ENCODE measurements at regions of chr5 and their contacts with region 1.

Region 1: DNA sequence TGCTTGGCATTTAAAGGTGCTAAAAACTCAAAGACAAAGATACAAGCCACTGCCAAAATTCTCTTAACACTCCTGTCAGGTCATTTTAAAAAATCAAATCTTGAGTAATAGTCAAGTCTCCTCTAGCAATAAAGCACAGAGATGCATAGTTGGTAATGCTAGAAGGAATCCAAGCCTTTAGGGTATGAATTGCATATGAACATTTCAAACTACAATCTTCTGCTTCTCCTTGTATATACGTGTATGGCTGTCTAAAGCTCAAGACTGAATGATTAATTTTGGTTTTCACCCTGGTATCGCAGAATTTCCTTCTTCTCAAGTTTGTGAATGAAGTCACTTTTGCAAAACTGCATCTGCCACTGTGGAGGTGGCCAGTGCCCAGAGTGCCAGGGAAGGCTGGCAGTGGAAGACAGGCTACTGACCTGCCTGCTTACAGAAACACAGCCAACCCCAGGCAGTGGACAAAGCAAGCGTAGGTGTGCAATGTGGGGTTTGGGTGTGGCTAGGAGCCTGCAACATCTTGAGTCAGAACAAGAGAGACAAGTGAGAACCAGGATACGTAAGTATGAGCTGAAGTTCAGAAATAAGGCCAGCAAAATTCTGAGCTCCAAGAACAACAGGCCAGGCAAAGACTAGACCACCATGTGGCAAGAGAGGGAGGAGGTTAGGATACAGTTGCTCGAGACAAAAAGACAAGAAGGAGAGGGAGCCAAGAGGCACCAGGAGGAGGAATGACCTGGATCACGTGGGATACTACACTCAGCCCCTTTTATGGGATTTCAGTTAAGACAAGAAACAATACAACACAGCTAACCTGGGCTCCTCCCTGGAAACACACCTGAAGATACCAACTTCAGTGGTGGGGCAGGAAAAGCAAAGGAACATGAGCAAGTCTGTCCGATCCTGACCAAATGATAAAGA is 22.6 kb downstream of the MYO10 start:
- DNase-seq: no peak
- H3K4me3 ChIP-seq: no peak overlapping the region
- H3K4me3 Mint-ChIP-seq: no peak overlapping the region
- H3K27ac Mint-ChIP-seq: no peak overlapping the region
- H3K4me1 ChIP-seq: peaks cover 6% of the 10 kb centered on the region
- H3K4me1 Mint-ChIP-seq: peaks cover 7% of the 10 kb centered on the region
- H3K27me3 ChIP-seq: no peaks in the 10 kb centered on the region
- H3K27me3 Mint-ChIP-seq: no peaks in the 10 kb centered on the region
- CTCF ChIP-seq: no peak

Region 2: GRCh38 chr5:16759147-16759773 is 154.2 kb before region 1 on chr5:
- CTCF ChIA-PET with region 1: no interaction called
- POLR2A ChIA-PET with region 1: no interaction called
- intact Hi-C with region 1: no loop called
- DNase-seq: no peak
- H3K4me3 ChIP-seq: no peak overlapping the region
- H3K4me3 Mint-ChIP-seq: no peak overlapping the region
- H3K27ac Mint-ChIP-seq: peak overlapping the region; percentile 55
- H3K4me1 ChIP-seq: peaks cover 40% of the 10 kb centered on the region
- H3K4me1 Mint-ChIP-seq: peaks cover 7% of the 10 kb centered on the region
- H3K27me3 ChIP-seq: no peaks in the 10 kb centered on the region
- H3K27me3 Mint-ChIP-seq: no peaks in the 10 kb centered on the region
- CTCF ChIP-seq: no peak

Region 3: DNA sequence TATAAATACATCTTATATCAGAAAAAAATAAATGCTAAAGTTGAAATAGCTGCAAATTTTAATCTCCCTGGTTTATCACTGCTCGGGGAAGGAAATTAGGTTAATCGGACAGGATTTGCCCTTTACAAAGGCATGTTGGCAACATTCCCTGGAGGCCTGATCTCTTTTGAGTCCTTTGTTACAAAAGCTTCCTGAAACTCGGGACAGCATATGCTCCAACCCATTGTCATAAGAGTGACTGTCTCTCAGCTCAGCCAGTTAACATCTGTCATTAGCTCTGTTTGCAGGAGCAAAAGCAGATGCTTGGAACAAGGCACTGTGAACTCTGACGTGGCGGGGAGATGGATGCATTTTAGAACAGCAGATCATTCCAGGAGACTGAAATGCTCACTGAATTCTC is 58.0 kb before region 1 on chr5:
- CTCF ChIA-PET with region 1: no interaction called
- POLR2A ChIA-PET with region 1: no interaction called
- intact Hi-C with region 1: no loop called
- DNase-seq: no peak
- H3K4me3 ChIP-seq: no peak overlapping the region
- H3K4me3 Mint-ChIP-seq: no peak overlapping the region
- H3K27ac Mint-ChIP-seq: no peak overlapping the region
- H3K4me1 ChIP-seq: no peaks in the 10 kb centered on the region
- H3K4me1 Mint-ChIP-seq: peaks cover 17% of the 10 kb centered on the region
- H3K27me3 ChIP-seq: no peaks in the 10 kb centered on the region
- H3K27me3 Mint-ChIP-seq: no peaks in the 10 kb centered on the region
- CTCF ChIP-seq: no peak

Region 4: DNA sequence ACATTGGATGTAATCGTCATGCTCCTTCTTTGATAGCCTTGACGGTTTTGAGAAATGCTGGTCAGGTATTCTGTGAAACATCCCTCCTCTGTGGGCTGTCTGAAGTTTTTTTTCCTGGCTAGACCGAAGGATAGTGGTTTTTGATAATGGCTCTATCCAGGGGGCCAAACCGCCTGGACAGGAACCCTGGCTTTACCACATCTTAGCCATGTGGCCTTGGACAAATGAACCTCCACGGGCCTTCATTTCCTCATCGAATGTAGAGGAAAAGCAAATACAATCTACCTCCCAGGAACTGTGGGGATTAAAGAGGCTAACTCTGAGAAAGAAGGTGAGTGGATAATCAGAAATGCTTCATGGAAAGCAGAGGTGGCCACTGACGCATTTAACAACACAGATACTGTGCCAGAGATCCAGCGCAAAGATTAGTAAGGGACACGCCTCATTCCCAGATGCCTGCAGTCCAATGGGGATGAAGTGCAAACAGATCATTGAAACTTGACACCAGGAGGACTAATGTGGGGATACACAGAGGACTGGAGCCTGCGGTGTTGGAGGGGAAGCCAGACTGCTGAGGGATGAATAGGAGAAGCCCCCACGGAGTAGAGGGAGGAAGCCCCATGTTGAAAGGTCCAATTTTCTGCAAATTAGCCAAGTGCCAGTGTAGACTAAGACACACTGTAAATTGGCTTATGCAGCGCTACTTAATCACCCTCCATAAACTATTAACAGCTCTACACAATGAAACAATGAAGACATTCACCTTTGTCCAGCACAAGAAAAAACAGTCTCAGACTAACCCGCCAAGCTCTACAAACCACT is 19.0 kb before region 1 on chr5:
- CTCF ChIA-PET with region 1: interaction called, 4 read pairs
- POLR2A ChIA-PET with region 1: no interaction called
- intact Hi-C with region 1: loop called (anchors 1 kb)
- DNase-seq: peak; percentile 81 to 87
- H3K4me3 ChIP-seq: peak overlapping the region; percentile 5; the same call in 1 of the 2 replicates
- H3K4me3 Mint-ChIP-seq: peak overlapping the region; percentile 66
- H3K27ac Mint-ChIP-seq: peak overlapping the region; percentile 88
- H3K4me1 ChIP-seq: peaks cover 90% of the 10 kb centered on the region
- H3K4me1 Mint-ChIP-seq: peaks cover 70% of the 10 kb centered on the region
- H3K27me3 ChIP-seq: no peaks in the 10 kb centered on the region
- H3K27me3 Mint-ChIP-seq: no peaks in the 10 kb centered on the region
- CTCF ChIP-seq: no peak

Region 5: DNA sequence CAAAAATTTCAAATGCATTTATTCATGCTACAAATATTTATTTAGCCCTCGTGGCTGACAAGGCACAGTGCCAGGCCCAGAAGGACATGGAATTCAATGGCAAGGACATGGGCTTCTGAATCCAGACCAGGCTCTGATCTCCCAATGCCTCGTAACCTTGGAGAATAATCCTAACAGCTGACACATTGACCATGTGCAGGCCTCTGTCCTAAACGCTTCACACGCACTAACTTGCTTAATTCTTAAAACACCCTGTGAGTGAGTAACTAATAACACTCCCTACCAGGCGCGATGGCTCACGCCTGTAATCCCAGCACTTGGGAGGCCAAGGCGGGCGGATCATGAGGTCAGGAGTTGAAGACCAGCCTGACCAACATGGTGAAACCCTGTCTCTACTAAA is 10.6 kb before region 1 on chr5:
- CTCF ChIA-PET with region 1: no interaction called
- POLR2A ChIA-PET with region 1: no interaction called
- intact Hi-C with region 1: loop called (anchors 1 kb)
- DNase-seq: no peak
- H3K4me3 ChIP-seq: no peak overlapping the region
- H3K4me3 Mint-ChIP-seq: no peak overlapping the region
- H3K27ac Mint-ChIP-seq: no peak overlapping the region
- H3K4me1 ChIP-seq: peaks cover 46% of the 10 kb centered on the region
- H3K4me1 Mint-ChIP-seq: peaks cover 59% of the 10 kb centered on the region
- H3K27me3 ChIP-seq: no peaks in the 10 kb centered on the region
- H3K27me3 Mint-ChIP-seq: no peaks in the 10 kb centered on the region
- CTCF ChIP-seq: no peak

Region 6: GRCh38 chr5:17379100-17379951 is 465.9 kb after region 1 on chr5:
- CTCF ChIA-PET with region 1: no interaction called
- POLR2A ChIA-PET with region 1: no interaction called
- intact Hi-C with region 1: no loop called
- DNase-seq: no peak
- H3K4me3 ChIP-seq: no peak overlapping the region
- H3K4me3 Mint-ChIP-seq: no peak overlapping the region
- H3K27ac Mint-ChIP-seq: no peak overlapping the region
- H3K4me1 ChIP-seq: peaks cover 19% of the 10 kb centered on the region
- H3K4me1 Mint-ChIP-seq: peaks cover 23% of the 10 kb centered on the region
- H3K27me3 ChIP-seq: no peaks in the 10 kb centered on the region
- H3K27me3 Mint-ChIP-seq: no peaks in the 10 kb centered on the region
- CTCF ChIP-seq: no peak

Measured in Caco-2 (cell line).